Heart right ventricle (tissue), 16 donors: ENCODE measurements at regions of chr17 and their contacts with region 1.

Region 1: DNA sequence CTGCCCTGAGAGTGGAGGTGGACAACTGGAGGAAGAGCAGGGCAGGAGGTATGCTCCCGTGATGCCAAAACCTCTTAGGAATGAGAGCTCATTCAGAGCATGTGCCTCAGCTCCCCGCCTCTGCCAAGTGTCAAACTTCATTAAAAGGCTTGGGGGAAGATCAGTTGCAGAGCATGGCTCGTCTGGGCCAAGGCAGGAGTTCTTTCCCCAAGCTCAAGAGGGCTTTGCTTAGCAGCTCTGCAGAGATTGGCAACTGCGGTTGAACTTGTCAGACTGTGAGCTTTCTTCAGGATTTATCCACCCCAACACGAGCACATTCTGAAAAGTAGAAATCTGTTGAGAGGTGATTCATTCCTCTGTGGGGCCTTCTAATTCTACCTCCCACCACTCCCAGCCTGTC is 248.1 kb downstream of the HS3ST3A1 start:
- DNase-seq: peak; percentile 24 to 52
- ATAC-seq: peak; percentile 42 to 85 (median 76)
- H3K4me3 ChIP-seq: no peak overlapping the region
- H3K27ac ChIP-seq: peak overlapping the region in 4 of 10 donors; percentile 2 to 52 (median 7)
- H3K4me1 ChIP-seq: peaks cover 0 to 11% (median 0%) of the 10 kb centered on the region in 9 donors
- H3K27me3 ChIP-seq: no peaks in the 10 kb centered on the region
- CTCF ChIP-seq: no peak

Region 2: GRCh38 chr17:13415807-13416416 is 62.3 kb after region 1 on chr17:
- intact Hi-C with region 1: loop called in 2 of 10 experiments (anchors 10 kb)
- DNase-seq: peak; percentile 35 to 72
- ATAC-seq: peak; percentile 64 to 93 (median 82)
- H3K4me3 ChIP-seq: no peak overlapping the region
- H3K27ac ChIP-seq: peak overlapping the region in 8 of 10 donors; percentile 8 to 73 (median 58)
- H3K4me1 ChIP-seq: peaks cover 2 to 28% (median 19%) of the 10 kb centered on the region in 9 donors
- H3K27me3 ChIP-seq: no peaks in the 10 kb centered on the region
- CTCF ChIP-seq: peak in 1 of 9 donors; percentile 19

Region 3: GRCh38 chr17:13490906-13491482 is 137.4 kb after region 1 on chr17:
- intact Hi-C with region 1: no loop called
- DNase-seq: no peak
- ATAC-seq: no peak
- H3K4me3 ChIP-seq: no peak overlapping the region
- H3K27ac ChIP-seq: no peak overlapping the region
- H3K4me1 ChIP-seq: no peaks in the 10 kb centered on the region
- H3K27me3 ChIP-seq: no peaks in the 10 kb centered on the region
- CTCF ChIP-seq: no peak

Region 4: DNA sequence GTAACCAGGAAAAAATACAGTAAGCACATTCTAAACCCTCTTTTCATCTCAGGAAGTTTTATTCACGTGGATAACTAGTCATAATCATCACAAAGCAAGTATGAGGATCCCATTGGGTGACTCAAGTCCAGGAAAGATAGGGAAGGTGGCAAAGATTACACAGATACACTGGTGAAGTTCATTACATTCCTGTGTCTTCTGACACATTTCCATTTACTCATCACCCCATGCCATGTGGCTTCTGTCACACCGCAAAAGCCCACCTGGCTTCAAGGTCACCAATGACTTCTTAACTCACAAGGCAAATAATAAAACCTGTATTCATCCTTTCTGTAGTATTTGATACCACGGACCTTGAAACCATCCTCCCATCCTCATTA is 231.1 kb after region 1 on chr17:
- intact Hi-C with region 1: loop called in 1 of 10 experiments (anchors 5 kb)
- DNase-seq: no peak
- ATAC-seq: no peak
- H3K4me3 ChIP-seq: no peak overlapping the region
- H3K27ac ChIP-seq: no peak overlapping the region
- H3K4me1 ChIP-seq: peaks cover 0 to 5% (median 0%) of the 10 kb centered on the region in 9 donors
- H3K27me3 ChIP-seq: peaks cover 0 to 4% (median 0%) of the 10 kb centered on the region in 7 donors
- CTCF ChIP-seq: no peak